A673 (cell line): ENCODE measurements at regions of chr18 and their contacts with region 1.

Region 1: DNA sequence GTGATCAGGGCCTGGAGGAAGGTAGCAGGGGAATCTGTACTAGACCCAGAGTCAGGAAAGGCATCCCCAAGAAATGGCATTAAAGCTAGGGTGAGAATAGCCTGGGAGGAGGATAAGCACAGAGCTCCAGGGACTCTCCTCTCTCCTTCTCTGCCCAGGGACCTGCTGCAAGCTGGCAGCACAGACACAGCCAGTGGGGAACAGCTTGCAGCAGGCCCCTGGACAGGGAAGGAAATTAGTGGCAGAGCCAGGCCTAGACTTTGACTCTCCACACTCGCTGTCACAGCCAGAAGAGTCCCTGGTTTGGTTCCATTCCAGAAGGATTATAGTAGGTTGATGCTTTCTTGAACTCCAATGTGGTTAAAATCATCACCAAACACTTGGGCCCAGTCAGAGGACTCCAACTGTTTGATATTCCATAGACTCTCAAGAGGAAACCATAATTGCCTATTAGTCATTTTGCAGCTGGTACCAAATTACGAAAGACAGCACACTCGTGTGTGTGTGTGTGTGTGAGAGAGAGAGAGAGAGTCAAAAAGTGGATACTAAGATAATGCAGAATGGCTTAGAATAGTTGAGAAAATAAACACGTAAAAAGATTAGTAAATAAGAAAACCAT is 95.5 kb upstream of the ATP8B1 start:
- DNase-seq: peak; percentile 87
- H3K4me3 ChIP-seq: no peak overlapping the region
- H3K27ac ChIP-seq: no peak overlapping the region
- H3K4me1 ChIP-seq: peaks cover 5% of the 10 kb centered on the region
- H3K27me3 ChIP-seq: no peaks in the 10 kb centered on the region
- CTCF ChIP-seq: no peak

Region 2: GRCh38 chr18:57595347-57595746 is 303.3 kb before region 1 on chr18:
- CTCF ChIA-PET with region 1: no interaction called
- POLR2A ChIA-PET with region 1: no interaction called
- intact Hi-C with region 1: no loop called
- DNase-seq: no peak
- H3K4me3 ChIP-seq: no peak overlapping the region
- H3K27ac ChIP-seq: no peak overlapping the region
- H3K4me1 ChIP-seq: no peaks in the 10 kb centered on the region
- H3K27me3 ChIP-seq: no peaks in the 10 kb centered on the region
- CTCF ChIP-seq: no peak

Region 3: DNA sequence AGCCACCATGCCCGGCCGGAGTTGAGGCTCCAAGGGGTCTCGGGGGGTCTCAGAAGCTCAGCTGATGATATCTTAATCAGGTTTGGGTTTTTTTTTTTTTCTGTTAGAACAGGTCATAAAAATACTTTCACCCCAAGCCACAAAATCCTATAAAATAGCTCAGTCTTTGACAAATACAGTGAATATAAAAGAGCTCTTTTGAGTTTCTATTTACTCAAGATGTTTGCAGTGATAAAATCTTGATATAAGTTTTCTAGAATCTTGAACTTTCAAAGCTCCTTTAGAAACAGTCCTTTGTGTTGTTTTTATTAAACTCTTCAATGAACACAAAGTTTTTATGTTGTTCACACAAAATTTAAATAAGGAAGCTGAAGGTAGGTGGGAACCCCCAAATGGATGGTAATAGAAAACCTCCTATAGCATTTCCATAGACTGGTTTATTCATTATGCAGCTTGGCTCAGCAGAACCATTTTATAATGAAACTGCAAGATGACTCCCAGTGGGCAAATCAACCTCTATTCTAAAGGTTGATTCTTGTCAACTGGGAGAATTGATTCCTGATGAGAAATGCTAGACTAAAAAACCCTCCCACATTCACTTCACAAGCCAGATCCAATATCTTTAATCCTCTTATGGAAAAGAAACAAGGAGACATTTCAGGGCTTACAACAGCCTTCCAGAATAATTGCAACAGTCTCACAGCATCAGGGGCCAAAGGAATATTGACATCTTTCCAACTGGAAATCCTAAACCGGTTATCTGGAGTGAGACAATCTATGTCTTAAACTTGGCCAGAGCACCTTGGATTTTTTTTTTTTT is 263.4 kb before region 1 on chr18:
- CTCF ChIA-PET with region 1: no interaction called
- POLR2A ChIA-PET with region 1: interaction called, 12 read pairs
- intact Hi-C with region 1: no loop called
- DNase-seq: peak; percentile 57
- H3K4me3 ChIP-seq: no peak overlapping the region
- H3K27ac ChIP-seq: peak overlapping the region; percentile 57
- H3K4me1 ChIP-seq: peaks cover 23% of the 10 kb centered on the region
- H3K27me3 ChIP-seq: no peaks in the 10 kb centered on the region
- CTCF ChIP-seq: no peak

Region 4: GRCh38 chr18:58025733-58026132 is 127.1 kb after region 1 on chr18:
- CTCF ChIA-PET with region 1: no interaction called
- POLR2A ChIA-PET with region 1: no interaction called
- intact Hi-C with region 1: no loop called
- DNase-seq: no peak
- H3K4me3 ChIP-seq: no peak overlapping the region
- H3K27ac ChIP-seq: no peak overlapping the region
- H3K4me1 ChIP-seq: no peaks in the 10 kb centered on the region
- H3K27me3 ChIP-seq: peaks cover 10% of the 10 kb centered on the region
- CTCF ChIP-seq: no peak

Region 5: DNA sequence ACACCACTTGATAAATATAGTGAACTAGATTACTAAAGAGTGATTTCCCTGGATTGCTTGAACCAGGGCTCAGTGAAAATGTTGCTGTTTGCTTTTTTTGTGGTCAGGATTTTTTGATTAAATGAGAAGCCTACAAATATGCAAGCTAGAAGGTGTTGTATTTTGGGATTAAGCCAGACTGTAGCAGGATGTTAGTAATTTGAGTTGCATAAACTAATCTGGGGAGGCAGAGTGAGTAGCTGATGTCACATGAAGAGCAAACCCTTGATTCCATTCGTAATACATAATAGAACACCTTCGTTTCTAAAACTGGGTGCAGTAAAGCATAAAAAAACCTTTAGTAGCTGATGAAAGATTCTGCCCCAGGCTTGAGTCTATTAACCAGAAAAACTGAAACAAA is 177.4 kb after region 1 on chr18:
- CTCF ChIA-PET with region 1: no interaction called
- POLR2A ChIA-PET with region 1: no interaction called
- intact Hi-C with region 1: no loop called
- DNase-seq: no peak
- H3K4me3 ChIP-seq: no peak overlapping the region
- H3K27ac ChIP-seq: no peak overlapping the region
- H3K4me1 ChIP-seq: no peaks in the 10 kb centered on the region
- H3K27me3 ChIP-seq: no peaks in the 10 kb centered on the region
- CTCF ChIP-seq: no peak